Transverse colon (tissue), 4 donors: ENCODE measurements at regions of chr6 and their contacts with region 1.

Region 1: GRCh38 chr6:56491606-56492328 is 150.9 kb downstream of the DST start:
- DNase-seq: no peak
- H3K4me3 ChIP-seq: no peak overlapping the region
- H3K27ac ChIP-seq: peak overlapping the region; percentile 39 to 67 (median 64)
- H3K4me1 ChIP-seq: peaks cover 0 to 18% (median 3%) of the 10 kb centered on the region in 4 donors
- H3K27me3 ChIP-seq: no peaks in the 10 kb centered on the region
- CTCF ChIP-seq: no peak
- EP300 ChIP-seq: no peak
- POLR2A ChIP-seq: no peak

Region 2: DNA sequence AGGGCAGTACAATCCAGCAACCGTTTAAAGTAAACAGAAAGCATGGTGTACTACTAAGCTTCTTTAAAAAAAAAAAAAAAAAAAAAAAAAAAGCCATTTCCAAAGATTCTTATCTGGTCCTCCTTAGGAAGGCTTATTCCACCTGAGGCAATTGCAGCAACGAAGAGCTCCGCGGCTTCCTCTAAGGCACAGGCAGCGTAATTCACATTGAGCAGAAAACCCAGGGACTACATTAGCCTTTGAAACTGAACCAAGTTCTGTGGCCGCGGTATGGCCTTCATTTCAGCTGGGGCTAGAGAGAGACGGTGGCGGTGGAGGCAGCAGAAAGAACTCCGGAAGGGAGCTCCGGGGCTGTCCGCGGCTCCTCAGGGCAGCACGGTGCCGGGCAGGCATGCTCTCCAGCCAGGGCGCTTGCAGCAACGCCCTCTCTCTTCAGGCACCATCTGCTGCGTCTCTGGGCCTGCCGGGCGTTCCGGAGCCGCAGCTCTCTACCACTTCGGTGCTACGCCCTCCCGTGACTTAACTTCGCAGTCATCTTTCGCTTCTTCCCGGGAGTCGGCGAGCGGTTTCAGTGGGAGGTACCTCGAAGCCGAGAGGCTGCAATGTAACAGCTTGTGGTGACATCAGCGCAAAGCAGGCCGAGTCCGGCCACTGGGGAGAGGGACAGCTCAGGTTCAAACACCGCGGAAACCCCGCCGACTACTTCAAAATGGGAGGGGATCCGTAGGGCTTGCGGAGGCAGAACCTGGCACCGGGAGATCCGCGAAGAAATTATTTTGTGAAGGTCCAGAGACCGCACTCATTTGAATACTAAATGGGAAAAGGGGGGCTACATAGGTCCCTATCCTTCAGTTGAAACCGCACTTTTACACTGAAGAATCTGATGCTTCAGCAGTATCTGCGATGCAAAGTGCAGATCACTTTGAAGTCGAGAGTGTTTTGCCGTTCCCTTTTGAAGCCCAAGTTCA is 50.9 kb after region 1 on chr6:
- in situ Hi-C with region 1: no loop called
- intact Hi-C with region 1: loop called (anchors 10 kb)
- DNase-seq: peak; percentile 94
- H3K4me3 ChIP-seq: peak overlapping the region; percentile 56 to 66 (median 60)
- H3K27ac ChIP-seq: peak overlapping the region; percentile 91 to 98 (median 96)
- H3K4me1 ChIP-seq: peaks cover 0 to 38% (median 19%) of the 10 kb centered on the region in 4 donors
- H3K27me3 ChIP-seq: no peaks in the 10 kb centered on the region
- CTCF ChIP-seq: peak in 3 of 5 experiments; percentile 17 to 30 (median 30)
- EP300 ChIP-seq: no peak
- POLR2A ChIP-seq: peak; percentile 93

Region 3: GRCh38 chr6:56951049-56951831 is 459.5 kb after region 1 on chr6:
- in situ Hi-C with region 1: no loop called
- intact Hi-C with region 1: no loop called
- DNase-seq: no peak
- H3K4me3 ChIP-seq: no peak overlapping the region
- H3K27ac ChIP-seq: no peak overlapping the region
- H3K4me1 ChIP-seq: peaks cover 0 to 15% (median 10%) of the 10 kb centered on the region in 4 donors
- H3K27me3 ChIP-seq: peaks cover 43% of the 10 kb centered on the region
- CTCF ChIP-seq: no peak
- EP300 ChIP-seq: no peak
- POLR2A ChIP-seq: no peak